Sigmoid colon (tissue), 7 donors: ENCODE measurements at regions of chr3 and their contacts with region 1.

Region 1: DNA sequence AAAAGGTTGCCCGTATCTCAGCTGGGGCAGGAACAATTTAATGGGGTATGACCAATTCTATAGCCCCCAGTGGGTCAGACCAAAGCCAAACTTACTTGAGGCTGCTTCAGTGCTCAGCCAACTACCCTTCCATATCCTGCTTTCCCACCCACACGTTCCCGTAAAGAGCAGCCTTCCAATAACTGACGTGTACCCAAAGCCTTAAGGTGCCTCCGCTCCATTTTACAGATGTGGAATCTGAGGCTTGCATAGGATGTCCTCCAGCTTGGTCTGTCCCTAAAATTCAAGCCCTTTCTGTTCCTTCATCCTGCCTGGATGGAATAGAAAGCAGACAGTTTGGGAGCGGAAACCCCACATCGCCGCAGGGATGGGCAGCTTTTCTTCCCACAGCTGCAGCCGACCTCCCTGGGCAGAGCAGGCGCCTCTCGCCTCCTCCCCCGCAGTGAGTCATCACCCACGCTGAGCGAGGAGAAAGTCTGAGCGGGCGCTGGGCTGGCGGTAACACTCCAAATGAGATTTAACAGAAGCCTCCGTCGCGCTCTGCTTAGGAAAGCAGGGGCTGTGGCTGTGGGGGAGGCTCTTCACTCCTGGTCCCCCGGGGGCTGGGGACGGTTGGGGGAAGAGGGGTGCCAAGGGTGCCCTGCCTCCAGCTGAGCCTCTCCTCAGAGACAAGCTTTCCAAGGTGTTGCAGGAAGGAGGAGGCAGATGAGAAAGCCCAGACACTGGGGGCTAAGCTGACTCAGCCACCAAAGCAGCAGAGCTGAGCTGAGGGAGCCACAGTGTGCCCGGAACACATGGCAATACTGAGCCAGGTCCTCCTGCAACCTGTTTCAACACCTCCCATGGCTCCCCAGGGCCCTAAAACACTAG is 57.8 kb upstream of the HRH1 start:
- DNase-seq: peak; percentile 91
- H3K4me3 ChIP-seq: peak overlapping the region in 3 of 4 donors; percentile 30 to 43 (median 37)
- H3K27ac ChIP-seq: peak overlapping the region; percentile 83 to 91 (median 87)
- H3K4me1 ChIP-seq: peaks cover 0 to 54% (median 37%) of the 10 kb centered on the region in 4 donors
- H3K27me3 ChIP-seq: no peaks in the 10 kb centered on the region
- CTCF ChIP-seq: no peak
- EP300 ChIP-seq: peak in 2 of 4 donors; percentile 42 to 59
- POLR2A ChIP-seq: no peak

Region 2: GRCh38 chr3:11211531-11212298 is 115.2 kb after region 1 on chr3:
- intact Hi-C with region 1: loop called (anchors 5 kb)
- DNase-seq: peak; percentile 55
- H3K4me3 ChIP-seq: no peak overlapping the region
- H3K27ac ChIP-seq: peak overlapping the region in 3 of 4 donors; percentile 75 to 91 (median 80)
- H3K4me1 ChIP-seq: peaks cover 0 to 62% (median 45%) of the 10 kb centered on the region in 4 donors
- H3K27me3 ChIP-seq: no peaks in the 10 kb centered on the region
- CTCF ChIP-seq: peak in 1 of 4 experiments; percentile 16
- EP300 ChIP-seq: no peak
- POLR2A ChIP-seq: no peak

Region 3: DNA sequence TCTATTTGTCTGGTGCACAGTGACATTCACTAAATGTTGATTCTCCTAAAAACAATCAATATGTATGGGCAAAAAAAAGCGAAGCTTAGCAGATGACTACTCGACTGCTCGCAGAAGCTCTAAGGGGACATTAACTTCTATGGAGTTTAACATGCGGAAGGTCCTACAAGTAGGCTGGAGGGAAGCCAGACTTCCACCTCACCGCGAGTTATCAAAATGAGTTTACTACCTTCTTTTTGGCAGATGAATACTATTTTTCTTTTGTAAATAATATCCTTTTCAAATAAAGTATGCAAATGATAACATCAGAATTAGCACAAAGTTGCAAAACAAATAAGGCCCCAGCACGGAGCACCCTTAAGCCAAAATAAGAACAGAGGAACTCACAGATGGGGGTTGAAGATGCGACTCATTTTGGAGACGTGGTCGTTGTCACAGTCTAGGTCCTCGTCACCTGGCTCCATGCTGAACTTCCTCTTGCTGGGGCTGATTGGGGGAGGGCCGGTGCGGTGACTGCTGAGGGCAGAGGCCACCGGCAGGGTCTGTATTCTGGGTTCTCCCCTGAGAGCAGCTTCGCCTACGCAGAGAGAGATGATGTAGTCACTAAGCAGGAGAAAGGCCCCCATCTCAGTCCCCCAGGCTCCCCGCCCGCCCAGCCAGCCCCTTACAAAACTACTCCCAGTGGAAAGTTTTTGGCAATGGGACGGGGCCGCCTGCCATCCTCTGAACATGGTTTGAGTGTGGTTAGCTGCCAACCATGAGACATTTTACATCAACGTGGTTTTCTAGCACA is 505.1 kb after region 1 on chr3:
- intact Hi-C with region 1: loop called (anchors 10 kb)
- DNase-seq: peak; percentile 85
- H3K4me3 ChIP-seq: no peak overlapping the region
- H3K27ac ChIP-seq: peak overlapping the region; percentile 85 to 94 (median 89)
- H3K4me1 ChIP-seq: peaks cover 3 to 92% (median 81%) of the 10 kb centered on the region in 4 donors
- H3K27me3 ChIP-seq: no peaks in the 10 kb centered on the region
- CTCF ChIP-seq: no peak
- EP300 ChIP-seq: no peak
- POLR2A ChIP-seq: no peak